ENCODE measurements at regions of chr20 and their contacts with region 1.

Region 1: GRCh38 chr20:4720041-4720976 is 1.4 kb upstream of the PRND start:
- DNase-seq: peak; percentile 87
- H3K4me3 ChIP-seq: no peak overlapping the region
- H3K27ac ChIP-seq: peak overlapping the region; percentile 57 to 85
- H3K4me1 ChIP-seq: peaks cover 16% of the 10 kb centered on the region
- H3K27me3 ChIP-seq: no peaks in the 10 kb centered on the region
- CTCF ChIP-seq: peak; percentile 56 to 77 (median 70)
- POLR2A ChIP-seq: no peak

Region 2: DNA sequence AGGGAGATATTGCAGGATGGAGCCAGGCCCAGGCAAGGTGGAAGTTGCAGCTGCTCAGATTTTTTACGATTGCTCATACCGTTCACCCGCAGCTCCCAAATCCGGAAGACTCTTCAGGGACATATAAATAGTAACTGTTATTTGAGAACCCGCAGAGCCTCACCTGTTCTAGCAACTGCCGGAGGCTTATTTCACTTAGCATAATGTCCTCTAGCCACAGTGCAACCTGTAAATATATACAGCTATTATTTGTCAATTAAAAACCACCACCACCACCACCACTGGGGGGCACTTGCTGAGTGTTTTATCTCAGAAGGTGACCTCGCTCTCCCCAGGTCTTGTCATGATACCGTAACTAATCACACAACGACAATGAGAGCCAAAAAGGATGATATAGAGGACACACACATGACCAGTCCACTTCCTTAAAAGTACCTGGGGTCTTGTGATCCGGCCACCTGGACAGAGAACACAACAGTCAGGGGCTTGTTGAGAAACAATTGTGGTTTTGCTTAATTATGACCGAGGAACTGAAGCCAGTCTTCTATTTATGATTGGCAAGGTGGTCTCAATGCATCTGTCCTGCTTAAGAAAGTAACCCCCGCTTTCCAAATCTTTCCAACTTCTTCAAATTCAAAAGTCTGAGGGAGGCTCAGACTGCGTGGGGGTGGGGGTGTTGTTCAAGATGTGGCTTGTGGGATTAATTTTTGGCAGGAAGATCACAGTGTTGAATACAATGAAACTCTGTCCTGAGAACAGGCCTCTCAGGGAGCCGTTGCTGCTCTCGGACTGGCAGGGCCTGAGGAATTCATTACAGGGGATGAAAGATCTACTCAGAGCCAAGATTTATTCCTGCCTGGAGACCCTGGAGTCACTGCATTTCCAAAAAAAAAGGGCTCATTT is 106.3 kb before region 1 on chr20:
- intact Hi-C with region 1: loop called (anchors 5 kb)
- DNase-seq: peak; percentile 86
- H3K4me3 ChIP-seq: no peak overlapping the region
- H3K27ac ChIP-seq: peak overlapping the region; percentile 60 to 65
- H3K4me1 ChIP-seq: peaks cover 33% of the 10 kb centered on the region
- H3K27me3 ChIP-seq: no peaks in the 10 kb centered on the region
- CTCF ChIP-seq: peak; percentile 25 to 61 (median 36)
- POLR2A ChIP-seq: no peak

Region 3: GRCh38 chr20:4876731-4877130 is 156.4 kb after region 1 on chr20:
- intact Hi-C with region 1: no loop called
- DNase-seq: no peak
- H3K4me3 ChIP-seq: no peak overlapping the region
- H3K27ac ChIP-seq: no peak overlapping the region
- H3K4me1 ChIP-seq: no peaks in the 10 kb centered on the region
- H3K27me3 ChIP-seq: no peaks in the 10 kb centered on the region
- CTCF ChIP-seq: no peak
- POLR2A ChIP-seq: no peak